Prostate gland (tissue), 2 donors: ENCODE measurements at regions of chr7 and their contacts with region 1.

Region 1: GRCh38 chr7:35801392-35802101 is 690 bp downstream of the SEPTIN7 start:
- DNase-seq: peak; percentile 60
- H3K4me3 ChIP-seq: peak overlapping the region; percentile 56 to 90
- H3K27ac ChIP-seq: peak overlapping the region; percentile 89 to 96
- H3K4me1 ChIP-seq: no peaks in the 10 kb centered on the region
- H3K27me3 ChIP-seq: no peaks in the 10 kb centered on the region
- CTCF ChIP-seq: peak; percentile 30 to 50 (median 43)
- POLR2A ChIP-seq: no peak

Region 2: DNA sequence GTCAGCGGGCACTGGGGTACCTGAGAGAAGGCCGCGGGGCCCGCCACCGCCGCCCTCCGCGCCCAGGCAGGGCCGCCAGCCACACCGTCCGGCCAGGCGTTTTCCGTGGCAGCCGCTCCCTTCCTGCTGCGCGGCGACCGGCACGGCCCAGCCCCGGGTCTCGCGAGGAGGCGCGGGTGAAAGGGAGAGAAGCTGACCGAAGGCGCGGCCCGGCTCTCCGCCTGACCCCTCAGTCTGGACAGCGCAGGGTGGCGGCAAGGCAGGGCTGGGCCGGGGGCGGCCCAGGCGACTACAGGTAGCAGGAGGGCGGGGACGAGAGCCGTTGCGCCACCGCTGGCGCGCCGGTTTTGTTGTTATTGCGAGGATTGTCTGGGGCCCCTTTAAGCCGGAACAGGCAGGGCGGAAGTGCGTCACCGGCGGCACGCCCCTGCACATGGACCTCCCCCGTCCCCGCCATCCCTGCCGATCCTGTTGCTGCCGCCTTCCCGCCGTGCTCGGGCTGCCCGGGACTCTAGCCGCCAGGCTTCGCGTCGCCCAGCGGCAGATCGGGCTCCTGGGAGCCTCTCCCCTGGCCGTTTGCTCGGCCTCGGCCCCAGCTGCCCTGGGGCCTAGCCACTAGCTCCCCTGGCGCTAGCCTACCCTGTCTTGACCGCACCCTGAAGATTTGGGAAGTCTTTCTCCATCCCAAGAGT is 106.6 kb before region 1 on chr7 and contains the start of gene HERPUD2:
- intact Hi-C with region 1: loop called (anchors 2 kb)
- DNase-seq: peak; percentile 96
- H3K4me3 ChIP-seq: peak within 1 kb of the TSS; percentile 92 to 98
- H3K27ac ChIP-seq: peak within 1 kb of the TSS; percentile 92 to 95
- H3K4me1 ChIP-seq: no peaks in the 10 kb centered on the region
- H3K27me3 ChIP-seq: no peaks in the 10 kb centered on the region
- CTCF ChIP-seq: peak in 1 of 4 experiments; percentile 16
- POLR2A ChIP-seq: peak; percentile 96
- total RNA-seq, gene HERPUD2: 25.3 to 58.3 TPM

Region 3: DNA sequence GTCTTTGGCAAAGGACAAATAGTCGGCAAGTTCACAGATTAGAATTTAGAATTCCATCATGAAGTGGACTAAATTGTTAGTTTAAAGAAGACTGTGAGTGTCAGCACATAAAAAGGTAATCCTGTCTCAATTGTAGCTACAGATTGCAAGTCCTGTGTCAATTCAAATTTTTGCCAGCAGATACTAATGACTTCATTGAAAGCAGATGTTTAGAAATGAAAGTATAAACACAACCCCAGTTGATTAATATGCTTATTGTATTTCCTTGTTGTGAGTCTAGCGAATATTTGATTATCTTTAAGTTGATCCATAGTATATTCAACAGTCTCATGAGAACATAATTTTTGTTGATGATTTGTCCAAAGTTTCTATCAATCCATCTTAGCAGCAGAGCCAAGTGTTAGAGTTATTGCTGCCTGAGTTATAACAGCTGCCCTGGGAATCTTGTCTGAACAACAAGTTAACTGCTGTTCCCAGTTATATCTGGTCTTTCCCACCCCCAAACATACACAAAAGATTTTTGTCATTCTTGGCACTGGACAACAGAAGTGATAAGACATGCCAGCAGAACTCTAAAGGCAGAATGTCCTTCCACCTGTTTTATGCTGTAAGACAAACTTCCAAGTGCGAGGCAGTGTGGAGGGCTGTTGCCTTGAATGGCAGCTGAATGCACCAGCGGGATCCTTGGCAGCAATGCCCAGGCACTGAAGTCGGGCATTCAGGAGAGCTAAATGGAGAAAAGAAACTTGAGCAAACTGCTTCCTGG is 85.3 kb before region 1 on chr7:
- intact Hi-C with region 1: loop called (anchors 2 kb)
- DNase-seq: peak; percentile 42
- H3K4me3 ChIP-seq: no peak overlapping the region
- H3K27ac ChIP-seq: no peak overlapping the region
- H3K4me1 ChIP-seq: no peaks in the 10 kb centered on the region
- H3K27me3 ChIP-seq: no peaks in the 10 kb centered on the region
- CTCF ChIP-seq: no peak
- POLR2A ChIP-seq: no peak

Region 4: DNA sequence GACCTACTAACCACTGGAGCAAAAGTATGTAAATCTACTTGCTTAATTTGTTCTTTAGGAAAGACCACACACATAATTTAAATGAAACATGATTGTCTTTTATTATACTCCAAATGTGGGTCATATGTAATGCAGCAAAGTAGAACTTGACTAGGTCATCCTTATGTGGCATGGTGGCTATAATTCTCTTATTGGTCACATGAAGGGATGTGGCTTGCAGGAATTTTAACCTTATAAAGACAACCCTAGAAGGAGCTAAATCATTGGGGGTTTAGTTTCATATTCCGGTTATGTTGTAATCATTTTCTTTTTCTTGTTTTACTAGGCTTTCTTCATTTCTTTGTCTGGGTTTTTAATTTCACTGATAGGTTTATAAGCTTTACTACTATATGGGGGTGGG is 93.2 kb after region 1 on chr7:
- intact Hi-C with region 1: loop called (anchors 5 kb)
- DNase-seq: no peak
- H3K4me3 ChIP-seq: no peak overlapping the region
- H3K27ac ChIP-seq: no peak overlapping the region
- H3K4me1 ChIP-seq: no peaks in the 10 kb centered on the region
- H3K27me3 ChIP-seq: no peaks in the 10 kb centered on the region
- CTCF ChIP-seq: no peak
- POLR2A ChIP-seq: no peak

Region 5: DNA sequence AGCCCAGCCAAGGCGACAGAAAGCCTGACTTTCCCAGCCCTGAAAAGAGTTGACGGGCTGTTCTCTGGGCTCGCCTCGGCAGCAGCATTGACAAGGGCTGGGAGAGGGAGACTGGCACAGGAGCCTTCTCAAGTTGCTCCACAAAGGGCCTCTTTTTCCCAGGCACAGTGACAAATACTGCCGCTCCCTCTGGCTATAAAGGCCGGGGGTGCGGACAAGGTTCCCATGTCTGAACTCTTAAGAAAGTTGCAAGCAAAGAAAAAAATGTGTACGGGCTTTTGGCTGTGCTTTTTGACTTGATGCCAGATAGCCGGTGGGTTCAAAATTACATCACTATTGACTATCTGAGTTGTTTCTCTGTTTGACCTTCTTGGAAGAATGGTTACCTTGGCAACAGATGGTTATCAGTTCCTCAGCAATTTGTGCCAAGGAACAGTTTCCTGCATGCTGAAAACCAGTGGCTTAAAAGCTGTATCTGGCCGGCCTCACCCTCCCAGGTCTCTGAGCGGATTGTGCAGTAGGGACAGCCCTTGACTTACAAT is 235.6 kb after region 1 on chr7:
- intact Hi-C with region 1: no loop called
- DNase-seq: peak; percentile 94
- H3K4me3 ChIP-seq: no peak overlapping the region
- H3K27ac ChIP-seq: peak overlapping the region; percentile 51 to 59
- H3K4me1 ChIP-seq: peaks cover 11% of the 10 kb centered on the region
- H3K27me3 ChIP-seq: no peaks in the 10 kb centered on the region
- CTCF ChIP-seq: no peak
- POLR2A ChIP-seq: no peak

Region 6: GRCh38 chr7:36244429-36244828 is 442.9 kb after region 1 on chr7:
- intact Hi-C with region 1: no loop called
- DNase-seq: no peak
- H3K4me3 ChIP-seq: no peak overlapping the region
- H3K27ac ChIP-seq: no peak overlapping the region
- H3K4me1 ChIP-seq: no peaks in the 10 kb centered on the region
- H3K27me3 ChIP-seq: no peaks in the 10 kb centered on the region
- CTCF ChIP-seq: no peak
- POLR2A ChIP-seq: no peak